Activated B cell treated with CpG ODN at 0.5 μM for 24 hours (primary cell): ENCODE measurements at regions of chr19 and their contacts with region 1.

Region 1: GRCh38 chr19:33176670-33177416 is 17.3 kb upstream of the LRP3 start:
- DNase-seq: peak; percentile 97
- ATAC-seq: peak; percentile 86
- H3K4me3 Mint-ChIP-seq: peak overlapping the region; percentile 93
- H3K27ac Mint-ChIP-seq: peak overlapping the region; percentile 98
- H3K4me1 Mint-ChIP-seq: peaks cover 34% of the 10 kb centered on the region
- H3K27me3 Mint-ChIP-seq: peaks cover 2% of the 10 kb centered on the region
- CTCF ChIP-seq: no peak

Region 2: DNA sequence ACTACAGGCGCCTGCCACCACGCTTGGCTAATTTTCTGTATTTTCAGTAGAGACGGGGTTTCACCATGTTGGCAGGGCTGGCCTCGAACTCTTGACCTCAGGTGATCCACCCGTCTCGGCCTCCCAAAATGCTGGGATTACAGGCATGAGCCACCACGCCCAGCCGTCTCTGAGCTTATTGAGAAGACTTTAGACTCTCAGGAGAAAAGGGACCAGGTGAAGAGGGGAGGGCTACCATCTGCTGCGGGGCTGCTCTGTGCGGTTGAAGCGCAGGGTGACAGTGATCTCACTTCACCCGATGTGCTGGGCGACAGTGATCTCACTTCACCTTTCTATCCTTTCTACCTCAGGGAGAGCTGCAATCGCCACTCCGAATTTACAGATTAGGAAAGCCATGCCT is 570.6 kb before region 1 on chr19:
- CTCF ChIA-PET with region 1: no interaction called
- POLR2A ChIA-PET with region 1: interaction called, 10 read pairs
- intact Hi-C with region 1: no loop called
- DNase-seq: no peak
- ATAC-seq: no peak
- H3K4me3 Mint-ChIP-seq: no peak overlapping the region
- H3K27ac Mint-ChIP-seq: no peak overlapping the region
- H3K4me1 Mint-ChIP-seq: no peaks in the 10 kb centered on the region
- H3K27me3 Mint-ChIP-seq: no peaks in the 10 kb centered on the region
- CTCF ChIP-seq: no peak

Region 3: GRCh38 chr19:33080761-33081681 is 95.8 kb before region 1 on chr19 and contains the start of gene GPATCH1:
- CTCF ChIA-PET with region 1: no interaction called
- POLR2A ChIA-PET with region 1: interaction called, 12 read pairs
- intact Hi-C with region 1: loop called (anchors 1 kb)
- DNase-seq: peak; percentile 83
- ATAC-seq: peak; percentile 98
- H3K4me3 Mint-ChIP-seq: peak within 1 kb of the TSS; percentile 99
- H3K27ac Mint-ChIP-seq: peak within 1 kb of the TSS; percentile 93
- H3K4me1 Mint-ChIP-seq: peaks cover 23% of the 10 kb centered on the region
- H3K27me3 Mint-ChIP-seq: no peaks in the 10 kb centered on the region
- CTCF ChIP-seq: no peak
- total RNA-seq, gene GPATCH1: 12.8 and 13.0 TPM in 2 replicates

Region 4: DNA sequence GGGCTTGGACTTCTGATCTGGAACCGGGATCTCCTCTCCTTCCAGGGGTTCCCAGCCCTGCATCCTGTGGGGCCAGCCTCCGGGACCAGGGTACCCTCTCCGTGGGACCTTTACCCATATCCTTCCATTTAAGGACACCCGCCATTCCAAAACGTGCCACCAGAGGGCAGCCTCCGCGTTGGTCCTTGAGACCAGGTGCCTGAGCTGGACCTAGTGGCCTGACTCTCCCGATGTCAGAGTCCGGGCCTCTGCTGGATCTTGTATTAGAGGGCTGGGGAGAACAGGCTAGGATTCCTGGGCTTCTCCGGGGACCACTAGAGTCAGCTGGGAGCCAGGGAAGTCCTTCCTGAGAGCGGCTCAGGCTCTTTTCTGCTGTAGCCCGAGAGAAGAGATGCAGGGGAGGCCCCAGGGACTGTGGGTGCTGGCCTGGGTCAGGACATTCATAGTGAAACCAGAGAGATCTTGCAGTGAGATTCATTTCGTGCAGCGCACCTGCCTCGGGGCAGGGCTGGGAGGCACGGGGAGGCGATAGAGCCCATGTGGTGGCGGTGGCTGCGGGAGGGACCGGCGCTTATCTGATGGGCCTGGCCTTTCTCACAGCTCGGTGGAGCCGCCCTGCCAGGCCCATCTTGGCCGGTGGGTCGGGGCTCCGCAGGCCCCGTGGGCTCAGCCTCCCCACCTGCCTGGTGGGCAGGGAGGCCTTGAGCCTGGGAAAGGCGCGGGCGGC is 58.6 kb after region 1 on chr19:
- CTCF ChIA-PET with region 1: interaction called, 4 read pairs
- POLR2A ChIA-PET with region 1: no interaction called
- intact Hi-C with region 1: loop called (anchors 2 kb)
- DNase-seq: peak; percentile 74
- ATAC-seq: peak; percentile 91
- H3K4me3 Mint-ChIP-seq: peak overlapping the region; percentile 44
- H3K27ac Mint-ChIP-seq: no peak overlapping the region
- H3K4me1 Mint-ChIP-seq: peaks cover 4% of the 10 kb centered on the region
- H3K27me3 Mint-ChIP-seq: peaks cover 10% of the 10 kb centered on the region
- CTCF ChIP-seq: peak; percentile 41

Region 5: DNA sequence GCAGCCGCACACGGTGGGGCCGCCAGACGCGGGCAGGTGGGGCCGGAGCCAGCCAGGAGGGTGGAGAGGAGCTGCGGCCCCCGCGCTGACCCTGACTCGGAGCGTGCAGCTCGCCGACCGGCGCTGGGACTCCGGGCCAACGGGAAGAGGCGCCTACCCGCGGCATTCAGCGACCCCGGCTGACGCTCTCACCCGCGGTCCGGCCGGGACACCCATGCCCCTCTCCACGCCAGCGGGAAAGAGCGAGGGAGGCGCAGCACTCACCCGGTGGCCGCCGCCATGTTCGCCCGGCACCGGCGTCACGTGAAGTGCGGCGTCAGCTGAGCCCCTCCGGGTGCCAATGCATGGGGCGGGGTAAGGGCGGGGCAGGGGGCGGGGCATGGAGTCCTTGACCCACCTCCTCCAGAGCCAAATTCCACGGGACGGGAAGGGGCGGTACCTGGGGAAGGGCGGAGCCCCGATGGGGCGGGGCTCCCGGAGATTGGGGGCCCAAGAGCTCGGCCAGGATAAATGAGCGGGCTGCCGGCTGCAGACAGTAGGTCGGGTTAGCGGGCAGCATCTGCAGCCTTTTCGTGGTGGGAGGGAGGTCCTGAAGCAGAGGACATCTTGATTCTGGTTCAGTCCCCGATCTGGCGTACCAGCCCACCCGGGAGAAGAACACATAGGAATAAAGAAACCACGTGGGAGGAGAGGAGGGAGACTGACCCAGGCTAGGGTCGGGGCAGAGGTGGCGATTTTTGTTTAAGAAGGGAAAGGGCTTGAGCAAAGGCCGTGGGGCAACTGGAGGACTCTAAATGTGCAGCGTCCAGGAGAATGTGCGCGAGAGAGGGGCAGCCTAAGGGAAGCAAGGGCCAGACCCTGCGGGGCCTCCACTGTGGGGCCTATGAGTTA is 344.9 kb after region 1 on chr19 and contains the start of gene PEPD:
- CTCF ChIA-PET with region 1: no interaction called
- POLR2A ChIA-PET with region 1: interaction called, 5 read pairs
- intact Hi-C with region 1: loop called (anchors 1 kb)
- DNase-seq: peak; percentile 78
- ATAC-seq: peak; percentile 98
- H3K4me3 Mint-ChIP-seq: peak within 1 kb of the TSS; percentile 91
- H3K27ac Mint-ChIP-seq: peak within 1 kb of the TSS; percentile 66
- H3K4me1 Mint-ChIP-seq: peaks cover 19% of the 10 kb centered on the region
- H3K27me3 Mint-ChIP-seq: peaks cover 3% of the 10 kb centered on the region
- CTCF ChIP-seq: no peak
- total RNA-seq, gene PEPD: 49.1 and 49.4 TPM in 2 replicates

Region 6: GRCh38 chr19:34171877-34172660 is 995.2 kb after region 1 on chr19 and contains the start of gene LSM14A:
- CTCF ChIA-PET with region 1: no interaction called
- POLR2A ChIA-PET with region 1: interaction called, 6 read pairs
- intact Hi-C with region 1: loop called (anchors 2 kb)
- DNase-seq: peak; percentile 93
- ATAC-seq: peak; percentile 78
- H3K4me3 Mint-ChIP-seq: peak within 1 kb of the TSS; percentile 97
- H3K27ac Mint-ChIP-seq: peak within 1 kb of the TSS; percentile 98
- H3K4me1 Mint-ChIP-seq: peaks cover 55% of the 10 kb centered on the region
- H3K27me3 Mint-ChIP-seq: no peaks in the 10 kb centered on the region
- CTCF ChIP-seq: no peak
- total RNA-seq, gene LSM14A: 136 and 142 TPM in 2 replicates